Head of caudate nucleus (tissue), 42 donors: ENCODE measurements at regions of chr17 and their contacts with region 1.

Region 1: DNA sequence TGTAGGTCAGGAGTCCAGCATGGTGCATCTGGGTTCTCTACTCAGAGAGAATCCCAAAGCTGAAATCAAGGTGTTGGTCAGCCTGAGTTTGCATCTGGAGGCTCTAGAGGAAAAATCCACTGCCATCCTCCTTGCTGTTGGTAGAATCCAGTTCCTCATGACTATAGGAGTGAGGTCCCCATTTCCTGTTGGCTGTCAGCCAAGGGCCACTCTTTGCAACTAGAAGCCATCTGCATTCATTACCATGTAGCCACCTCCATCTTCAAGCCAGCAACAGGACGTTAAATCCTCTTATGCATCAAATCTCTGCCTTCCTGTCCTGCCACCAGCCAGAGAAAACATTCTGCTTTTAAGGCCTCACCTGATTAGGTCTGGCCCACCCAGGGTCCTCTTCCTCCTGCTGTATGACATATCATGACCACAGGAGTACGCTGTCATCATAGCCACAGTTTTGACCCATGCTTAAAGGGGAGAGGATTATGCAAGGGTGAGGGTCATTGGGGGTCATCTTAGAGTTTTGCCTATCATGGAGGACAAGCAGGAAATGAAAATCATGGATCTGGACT is 40.5 kb downstream of the DNAH9 start:
- DNase-seq: no peak

Region 2: GRCh38 chr17:11589716-11590115 is 49.1 kb before region 1 on chr17:
- intact Hi-C with region 1: loop called (anchors 10 kb)
- DNase-seq: no peak